ENCODE measurements at regions of chr6 and their contacts with region 1.

Region 1: DNA sequence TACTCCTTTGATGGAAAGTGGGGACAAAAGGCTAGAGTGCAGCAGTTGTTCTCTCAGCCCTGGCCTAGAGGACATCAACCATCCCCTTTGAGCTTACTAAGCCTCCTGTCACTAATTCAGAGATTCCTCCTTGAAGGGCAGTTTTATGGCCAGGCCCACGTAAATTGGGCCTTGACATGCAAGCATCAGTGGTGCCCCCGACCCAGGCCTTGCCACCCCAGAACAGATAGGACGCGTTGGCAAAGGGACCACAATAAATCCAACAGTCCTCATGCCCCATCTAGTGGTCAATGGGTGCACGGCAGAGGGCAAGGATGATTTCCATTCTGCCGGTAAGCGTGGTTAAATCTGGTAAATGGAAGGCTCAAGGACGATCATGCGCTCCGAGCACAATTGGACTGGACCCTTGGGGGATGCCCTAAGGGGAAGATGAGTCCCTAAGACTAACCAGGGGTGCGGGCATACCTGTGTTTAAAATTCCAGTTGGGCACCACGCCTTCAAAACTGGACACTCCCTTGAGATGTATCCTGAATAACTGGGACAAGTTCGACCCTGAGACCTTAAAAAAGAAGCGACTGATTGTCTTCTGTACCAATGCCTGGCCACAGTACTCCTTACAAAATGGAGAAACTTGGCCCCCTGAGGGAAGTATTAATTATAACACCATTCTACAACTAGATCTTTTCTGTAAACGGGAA is 32.6 kb downstream of the CEP85L start:
- DNase-seq: peak; percentile 16 to 47
- ATAC-seq: peak; percentile 81 to 85
- H3K4me3 ChIP-seq: no peak overlapping the region
- H3K27ac ChIP-seq: peak overlapping the region in 2 of 4 donors; percentile 45 to 55
- H3K4me1 ChIP-seq: peaks cover 64 to 65% of the 10 kb centered on the region in 2 donors
- H3K27me3 ChIP-seq: no peaks in the 10 kb centered on the region
- CTCF ChIP-seq: peak; percentile 80 to 91 (median 87)
- POLR2A ChIP-seq: no peak

Region 2: DNA sequence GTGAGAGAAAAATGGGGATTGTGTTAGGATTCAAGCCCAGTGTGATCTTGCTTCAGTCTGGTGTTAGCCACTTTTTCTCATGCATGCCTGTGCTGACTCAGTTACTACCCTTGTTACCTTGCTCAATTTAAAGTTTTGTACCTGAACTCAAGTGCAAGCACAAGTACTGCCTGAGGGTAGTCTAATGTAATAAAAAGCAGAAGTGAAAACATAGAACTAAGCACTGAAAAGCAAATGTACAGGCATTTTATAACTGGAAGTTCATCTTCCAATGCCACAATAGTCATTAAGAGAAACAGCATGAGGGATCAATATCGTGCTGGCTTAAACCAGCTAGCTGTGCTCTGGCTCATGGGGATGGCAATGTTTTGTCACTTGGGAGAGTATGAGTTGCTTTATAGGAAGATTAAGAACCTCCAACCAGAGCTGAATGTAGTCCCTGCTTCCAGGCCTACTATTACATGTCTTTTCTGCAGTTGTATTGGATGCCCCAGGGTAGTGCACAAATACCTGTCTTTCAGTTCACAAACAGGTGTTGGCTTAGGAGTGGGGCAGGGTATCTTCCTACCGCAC is 663.1 kb before region 1 on chr6:
- in situ Hi-C with region 1: loop called in 1 of 4 experiments (anchors 25 kb)
- intact Hi-C with region 1: no loop called
- DNase-seq: no peak
- ATAC-seq: no peak
- H3K4me3 ChIP-seq: no peak overlapping the region
- H3K27ac ChIP-seq: no peak overlapping the region
- H3K4me1 ChIP-seq: no peaks in the 10 kb centered on the region
- H3K27me3 ChIP-seq: no peaks in the 10 kb centered on the region
- CTCF ChIP-seq: no peak
- POLR2A ChIP-seq: no peak

Region 3: DNA sequence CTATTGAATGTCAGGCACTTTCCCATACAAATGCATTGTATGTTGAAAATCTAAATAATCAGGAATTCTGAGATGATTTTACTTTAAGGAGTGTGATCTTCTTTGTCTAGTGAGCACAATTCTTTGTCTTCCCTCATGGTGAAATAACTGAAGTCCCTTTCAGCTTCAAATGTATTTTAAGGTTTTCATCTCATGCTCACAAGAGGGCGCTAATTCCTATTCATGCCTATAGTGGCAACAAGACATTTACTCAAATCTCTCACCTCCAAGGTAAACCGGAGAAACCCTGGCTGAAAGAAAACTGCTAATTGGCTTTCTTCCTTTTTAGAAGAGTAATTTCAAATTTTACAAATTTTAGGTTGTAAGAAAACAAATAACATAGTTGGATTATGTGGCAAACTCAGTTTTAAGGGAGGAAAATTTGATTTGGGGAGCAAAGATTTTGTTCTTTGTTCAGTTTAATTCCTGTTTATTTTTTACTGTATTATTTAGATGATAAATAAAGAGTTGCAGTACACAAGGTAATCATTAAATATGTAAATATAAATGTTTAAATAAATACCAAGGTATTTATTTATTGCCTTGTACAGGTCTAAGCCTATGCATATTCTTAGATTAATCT is 642.7 kb before region 1 on chr6:
- in situ Hi-C with region 1: loop called in 3 of 4 experiments (anchors 25 kb)
- intact Hi-C with region 1: no loop called
- DNase-seq: no peak
- ATAC-seq: no peak
- H3K4me3 ChIP-seq: no peak overlapping the region
- H3K27ac ChIP-seq: no peak overlapping the region
- H3K4me1 ChIP-seq: no peaks in the 10 kb centered on the region
- H3K27me3 ChIP-seq: no peaks in the 10 kb centered on the region
- CTCF ChIP-seq: peak in 4 of 5 experiments; percentile 20 to 62 (median 39)
- POLR2A ChIP-seq: no peak

Region 4: GRCh38 chr6:118111708-118112107 is 507.1 kb before region 1 on chr6:
- in situ Hi-C with region 1: no loop called
- intact Hi-C with region 1: no loop called
- DNase-seq: no peak
- ATAC-seq: no peak
- H3K4me3 ChIP-seq: no peak overlapping the region
- H3K27ac ChIP-seq: no peak overlapping the region
- H3K4me1 ChIP-seq: no peaks in the 10 kb centered on the region
- H3K27me3 ChIP-seq: no peaks in the 10 kb centered on the region
- CTCF ChIP-seq: no peak
- POLR2A ChIP-seq: no peak

Region 5: GRCh38 chr6:118509009-118509617 is 109.7 kb before region 1 on chr6:
- in situ Hi-C with region 1: no loop called
- intact Hi-C with region 1: loop called (anchors 5 kb)
- DNase-seq: no peak
- ATAC-seq: no peak
- H3K4me3 ChIP-seq: no peak overlapping the region
- H3K27ac ChIP-seq: peak overlapping the region in 2 of 4 donors; percentile 12 to 75
- H3K4me1 ChIP-seq: peaks cover 57 to 70% of the 10 kb centered on the region in 2 donors
- H3K27me3 ChIP-seq: no peaks in the 10 kb centered on the region
- CTCF ChIP-seq: peak; percentile 44 to 75 (median 59)
- POLR2A ChIP-seq: no peak

Region 6: GRCh38 chr6:118565311-118565960 is 53.4 kb before region 1 on chr6:
- in situ Hi-C with region 1: no loop called
- intact Hi-C with region 1: loop called (anchors 2 kb)
- DNase-seq: no peak
- ATAC-seq: peak in 1 of 2 donors; percentile 62
- H3K4me3 ChIP-seq: no peak overlapping the region
- H3K27ac ChIP-seq: peak overlapping the region; percentile 38 to 95 (median 46)
- H3K4me1 ChIP-seq: peaks cover 27 to 39% of the 10 kb centered on the region in 2 donors
- H3K27me3 ChIP-seq: no peaks in the 10 kb centered on the region
- CTCF ChIP-seq: peak in 4 of 5 experiments; percentile 33 to 48 (median 45)
- POLR2A ChIP-seq: no peak

Region 7: GRCh38 chr6:118580585-118581419 is 38.0 kb before region 1 on chr6:
- in situ Hi-C with region 1: no loop called
- intact Hi-C with region 1: loop called (anchors 2 kb)
- DNase-seq: peak; percentile 71 to 86
- ATAC-seq: peak; percentile 86 to 92
- H3K4me3 ChIP-seq: peak overlapping the region; percentile 8 to 29 (median 24)
- H3K27ac ChIP-seq: peak overlapping the region; percentile 81 to 85 (median 84)
- H3K4me1 ChIP-seq: peaks cover 42 to 46% of the 10 kb centered on the region in 2 donors
- H3K27me3 ChIP-seq: no peaks in the 10 kb centered on the region
- CTCF ChIP-seq: peak; percentile 72 to 84 (median 80)
- POLR2A ChIP-seq: no peak

Region 8: DNA sequence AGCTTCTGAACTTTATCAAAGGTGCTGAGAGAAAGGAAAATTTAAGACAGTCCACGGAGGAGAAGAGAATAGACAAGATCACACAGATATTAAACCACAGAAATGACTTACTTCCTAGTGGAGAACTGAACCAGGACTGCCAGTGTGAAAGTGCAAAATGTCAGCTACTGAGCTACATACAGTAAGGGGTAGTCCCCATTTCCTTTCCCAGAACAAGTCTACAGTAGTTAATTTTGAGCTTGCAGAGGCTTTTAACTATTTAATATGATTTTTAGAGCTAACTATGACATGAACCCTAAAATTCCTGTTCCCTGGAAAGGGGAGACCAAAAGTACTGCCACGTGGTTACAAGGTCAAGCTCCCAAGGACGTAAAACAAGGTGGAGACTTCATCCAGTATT is 12.6 kb before region 1 on chr6:
- in situ Hi-C with region 1: no loop called
- intact Hi-C with region 1: loop called (anchors 2 kb)
- DNase-seq: no peak
- ATAC-seq: no peak
- H3K4me3 ChIP-seq: no peak overlapping the region
- H3K27ac ChIP-seq: no peak overlapping the region
- H3K4me1 ChIP-seq: peaks cover 10 to 22% of the 10 kb centered on the region in 2 donors
- H3K27me3 ChIP-seq: no peaks in the 10 kb centered on the region
- CTCF ChIP-seq: no peak
- POLR2A ChIP-seq: no peak

Region 9: DNA sequence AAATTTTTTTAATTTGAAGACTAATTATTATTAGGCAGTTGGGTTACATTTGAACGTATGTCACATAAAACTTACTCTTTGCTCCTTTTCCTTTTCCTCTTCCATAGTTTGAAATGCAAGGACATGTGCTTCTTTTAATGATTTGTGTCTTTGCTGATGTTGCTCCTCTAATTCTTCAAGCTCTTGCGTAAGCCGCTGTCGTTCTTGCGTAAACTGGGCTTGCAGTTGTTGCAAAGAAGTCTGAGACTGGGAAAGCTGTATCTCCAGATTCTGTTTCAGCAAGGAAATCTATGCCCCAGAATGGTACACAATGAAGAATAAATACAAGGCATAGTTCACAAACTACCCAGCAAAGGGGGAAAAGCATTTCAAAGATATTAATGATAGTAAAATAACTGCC is 361.2 kb after region 1 on chr6:
- in situ Hi-C with region 1: no loop called
- intact Hi-C with region 1: no loop called
- DNase-seq: peak in 1 of 2 donors; percentile 40
- ATAC-seq: no peak
- H3K4me3 ChIP-seq: no peak overlapping the region
- H3K27ac ChIP-seq: no peak overlapping the region
- H3K4me1 ChIP-seq: no peaks in the 10 kb centered on the region
- H3K27me3 ChIP-seq: no peaks in the 10 kb centered on the region
- CTCF ChIP-seq: no peak
- POLR2A ChIP-seq: no peak